Caco-2 (cell line): ENCODE measurements at regions of chr15 and their contacts with region 1.

Region 1: DNA sequence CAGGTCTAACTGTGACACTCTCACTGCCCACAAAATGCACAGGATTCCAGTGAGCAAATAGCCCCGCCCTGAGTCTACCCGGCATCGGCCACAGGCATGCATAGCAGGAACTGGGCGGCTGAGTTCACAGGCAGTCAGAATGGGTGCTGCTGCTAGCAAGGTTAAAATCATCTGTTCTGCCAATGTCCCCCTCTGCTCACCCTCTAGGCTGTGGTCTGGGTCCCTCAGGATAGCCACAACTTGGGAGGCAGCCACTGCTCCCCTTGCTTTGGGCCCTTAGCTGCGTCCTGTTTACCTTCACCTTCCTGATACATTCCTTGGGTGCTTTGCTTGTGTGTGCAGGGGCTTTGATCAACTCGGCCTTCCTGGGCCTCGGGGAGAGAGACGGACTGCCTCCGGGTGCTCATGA is 232.9 kb upstream of the RGMA start:
- DNase-seq: peak; percentile 81 to 82
- H3K4me3 ChIP-seq: peak overlapping the region; percentile 15
- H3K4me3 Mint-ChIP-seq: peak overlapping the region; percentile 70
- H3K27ac Mint-ChIP-seq: peak overlapping the region; percentile 96
- H3K4me1 ChIP-seq: peaks cover 19% of the 10 kb centered on the region
- H3K4me1 Mint-ChIP-seq: peaks cover 25% of the 10 kb centered on the region
- H3K27me3 ChIP-seq: no peaks in the 10 kb centered on the region
- H3K27me3 Mint-ChIP-seq: no peaks in the 10 kb centered on the region
- CTCF ChIP-seq: no peak

Region 2: DNA sequence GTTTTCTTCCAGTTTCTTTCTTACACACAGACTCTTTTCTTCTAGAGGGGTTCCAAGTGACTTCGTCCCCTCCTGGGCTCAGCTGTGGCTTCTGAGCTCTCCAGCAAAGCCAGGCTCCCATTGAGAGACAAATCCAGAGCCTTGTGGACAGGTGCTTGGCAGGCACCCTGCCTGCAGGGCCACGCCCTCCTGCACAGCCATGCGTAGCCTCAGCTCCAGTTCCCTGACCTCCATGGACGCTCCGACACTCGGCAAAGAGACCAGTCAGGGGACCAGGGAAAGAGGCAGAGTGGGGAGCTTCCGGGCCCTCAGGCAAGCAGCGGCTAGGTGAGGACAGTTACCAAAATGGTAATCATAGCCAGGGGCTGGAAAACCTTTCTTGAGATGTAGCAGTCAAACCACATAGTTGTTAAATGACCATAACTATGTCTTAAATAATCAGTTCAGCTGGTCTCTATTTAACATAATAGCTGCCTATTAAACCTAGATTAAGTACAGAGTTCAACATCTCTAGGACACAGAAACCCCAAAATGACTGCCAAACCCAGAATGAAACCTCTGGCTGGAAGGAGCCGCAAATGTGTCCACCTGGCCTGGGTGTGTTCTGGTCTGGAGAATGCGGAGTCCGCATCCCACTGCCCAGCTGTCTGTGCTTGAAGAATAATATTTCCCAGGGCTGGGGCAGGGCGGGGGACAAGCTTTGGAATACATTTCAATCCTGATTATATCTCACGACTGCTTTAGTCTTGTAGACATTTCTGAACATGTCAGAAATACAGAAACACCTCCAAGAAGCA is 163.6 kb before region 1 on chr15:
- CTCF ChIA-PET with region 1: no interaction called
- POLR2A ChIA-PET with region 1: no interaction called
- intact Hi-C with region 1: no loop called
- DNase-seq: no peak
- H3K4me3 ChIP-seq: no peak overlapping the region
- H3K4me3 Mint-ChIP-seq: no peak overlapping the region
- H3K27ac Mint-ChIP-seq: no peak overlapping the region
- H3K4me1 ChIP-seq: no peaks in the 10 kb centered on the region
- H3K4me1 Mint-ChIP-seq: no peaks in the 10 kb centered on the region
- H3K27me3 ChIP-seq: no peaks in the 10 kb centered on the region
- H3K27me3 Mint-ChIP-seq: peaks cover 3% of the 10 kb centered on the region
- CTCF ChIP-seq: no peak

Region 3: GRCh38 chr15:93235926-93236780 is 85.7 kb before region 1 on chr15:
- CTCF ChIA-PET with region 1: no interaction called
- POLR2A ChIA-PET with region 1: no interaction called
- intact Hi-C with region 1: loop called (anchors 5 kb)
- DNase-seq: peak; percentile 60 to 63
- H3K4me3 ChIP-seq: peak overlapping the region; percentile 22
- H3K4me3 Mint-ChIP-seq: peak overlapping the region; percentile 69
- H3K27ac Mint-ChIP-seq: peak overlapping the region; percentile 79
- H3K4me1 ChIP-seq: peaks cover 12% of the 10 kb centered on the region; the same call in 1 of the 2 replicates
- H3K4me1 Mint-ChIP-seq: peaks cover 11% of the 10 kb centered on the region
- H3K27me3 ChIP-seq: no peaks in the 10 kb centered on the region
- H3K27me3 Mint-ChIP-seq: no peaks in the 10 kb centered on the region
- CTCF ChIP-seq: no peak

Region 4: DNA sequence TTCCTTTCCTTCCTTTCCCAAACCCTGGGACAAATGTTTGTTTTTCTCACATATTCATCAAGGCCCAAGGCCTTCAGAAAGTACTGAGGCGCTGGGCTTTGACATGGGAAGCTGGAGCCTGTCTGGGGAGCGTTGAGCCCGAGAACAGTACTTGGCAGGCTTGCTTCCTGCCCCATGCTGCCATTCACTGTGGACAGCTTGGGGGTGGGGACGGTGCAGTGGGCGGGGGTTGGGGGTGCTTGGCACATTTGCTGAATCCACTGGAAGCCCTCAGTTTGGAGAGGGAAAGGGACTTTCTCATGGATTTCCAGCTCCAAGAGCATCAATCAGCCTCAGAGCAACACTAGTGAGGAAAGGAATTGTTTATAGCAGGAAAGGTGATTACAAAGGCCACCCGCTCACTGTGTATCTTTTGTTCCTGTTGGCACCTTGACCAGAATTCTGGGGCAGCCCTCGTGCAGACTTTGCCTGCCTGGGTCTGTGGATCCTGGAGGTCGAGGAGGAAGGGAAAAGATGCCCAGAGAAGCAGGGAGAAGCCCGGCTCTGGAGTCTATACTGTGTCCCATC is 33.1 kb before region 1 on chr15:
- CTCF ChIA-PET with region 1: no interaction called
- POLR2A ChIA-PET with region 1: no interaction called
- intact Hi-C with region 1: no loop called
- DNase-seq: no peak
- H3K4me3 ChIP-seq: no peak overlapping the region
- H3K4me3 Mint-ChIP-seq: no peak overlapping the region
- H3K27ac Mint-ChIP-seq: no peak overlapping the region
- H3K4me1 ChIP-seq: no peaks in the 10 kb centered on the region
- H3K4me1 Mint-ChIP-seq: no peaks in the 10 kb centered on the region
- H3K27me3 ChIP-seq: no peaks in the 10 kb centered on the region
- H3K27me3 Mint-ChIP-seq: peaks cover 10% of the 10 kb centered on the region
- CTCF ChIP-seq: no peak